Endothelial cell of umbilical vein (primary cell): ENCODE measurements at regions of chr22 and their contacts with region 1.

Region 1: DNA sequence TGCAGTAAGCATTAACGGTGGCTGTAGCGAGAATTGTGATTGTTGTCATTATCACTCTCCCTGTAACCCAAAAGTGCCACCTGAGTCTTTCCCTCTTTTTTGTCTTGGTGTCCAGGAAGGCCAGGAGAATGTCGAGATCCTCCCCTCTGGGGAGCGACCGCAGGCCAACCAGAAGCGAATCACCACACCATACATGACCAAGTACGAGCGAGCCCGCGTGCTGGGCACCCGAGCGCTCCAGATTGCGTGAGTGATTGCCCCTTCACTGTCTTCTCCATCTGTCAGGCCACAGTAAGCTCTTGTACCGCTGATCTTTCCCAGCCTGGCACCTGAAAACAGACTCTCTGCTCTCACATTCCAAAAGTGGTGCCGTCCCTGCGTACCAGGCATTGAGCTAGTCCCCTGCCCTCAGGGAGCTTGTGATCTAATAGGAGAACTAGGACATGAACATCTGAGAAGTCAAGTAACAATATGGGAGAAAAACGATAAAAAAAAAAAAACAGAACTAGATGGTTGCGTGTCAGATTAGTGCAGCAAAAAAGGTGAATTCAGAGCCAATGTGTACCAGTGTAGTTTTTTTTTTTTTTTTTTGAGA is 5.8 kb downstream of the POLR2F start:
- DNase-seq: no peak
- H3K4me3 ChIP-seq: no peak overlapping the region
- H3K27ac ChIP-seq: no peak overlapping the region
- H3K4me1 ChIP-seq: peaks cover 5% of the 10 kb centered on the region
- H3K27me3 ChIP-seq: no peaks in the 10 kb centered on the region
- CTCF ChIP-seq: no peak
- POLR2A ChIP-seq: no peak

Region 2: GRCh38 chr22:37913233-37913721 is 46.1 kb before region 1 on chr22:
- CTCF ChIA-PET with region 1: interaction called, 4 read pairs
- POLR2A ChIA-PET with region 1: interaction called, 10 read pairs
- dilution Hi-C with region 1: no loop called
- intact Hi-C with region 1: loop called (anchors 5 kb)
- DNase-seq: no peak
- H3K4me3 ChIP-seq: no peak overlapping the region
- H3K27ac ChIP-seq: no peak overlapping the region
- H3K4me1 ChIP-seq: no peaks in the 10 kb centered on the region
- H3K27me3 ChIP-seq: no peaks in the 10 kb centered on the region
- CTCF ChIP-seq: no peak
- POLR2A ChIP-seq: no peak